Mammary epithelial cell (primary cell): ENCODE measurements at regions of chr19 and their contacts with region 1.

Region 1: GRCh38 chr19:21835810-21836444 is at the start of gene ZNF43:
- DNase-seq: peak; percentile 92
- H3K4me3 ChIP-seq: peak within 1 kb of the TSS; percentile 52 to 61 (median 56)
- H3K27ac ChIP-seq: no peak within 1 kb of the TSS
- H3K4me1 ChIP-seq: no peaks in the 10 kb centered on the region
- H3K27me3 ChIP-seq: no peaks in the 10 kb centered on the region
- CTCF ChIP-seq: no peak
- total RNA-seq, gene ZNF43: 10.1 to 10.8 TPM

Region 2: GRCh38 chr19:21767065-21767800 is 68.7 kb before region 1 on chr19 and contains the start of gene ZNF100:
- CTCF ChIA-PET with region 1: no interaction called
- dilution Hi-C with region 1: no loop called
- in situ Hi-C with region 1: no loop called
- intact Hi-C with region 1: loop called (anchors 5 kb)
- DNase-seq: peak; percentile 88
- H3K4me3 ChIP-seq: peak within 1 kb of the TSS; percentile 74 to 82 (median 80)
- H3K27ac ChIP-seq: peak within 1 kb of the TSS; percentile 73
- H3K4me1 ChIP-seq: no peaks in the 10 kb centered on the region
- H3K27me3 ChIP-seq: no peaks in the 10 kb centered on the region
- CTCF ChIP-seq: no peak
- total RNA-seq, gene ZNF100: 7.4 to 11.8 TPM

Region 3: GRCh38 chr19:21851596-21852345 is 15.8 kb after region 1 on chr19:
- CTCF ChIA-PET with region 1: no interaction called
- dilution Hi-C with region 1: no loop called
- in situ Hi-C with region 1: no loop called
- intact Hi-C with region 1: loop called (anchors 2 kb)
- DNase-seq: peak; percentile 92
- H3K4me3 ChIP-seq: peak overlapping the region; percentile 63 to 69 (median 67)
- H3K27ac ChIP-seq: peak overlapping the region; percentile 35
- H3K4me1 ChIP-seq: no peaks in the 10 kb centered on the region
- H3K27me3 ChIP-seq: no peaks in the 10 kb centered on the region
- CTCF ChIP-seq: no peak